Cardiac septum (tissue), 1 donor: ENCODE measurements at regions of chr12 and their contacts with region 1.

Region 1: GRCh38 chr12:57896434-57897201 is 44.7 kb upstream of the ATP23 start:
- DNase-seq: peak; percentile 88

Region 2: DNA sequence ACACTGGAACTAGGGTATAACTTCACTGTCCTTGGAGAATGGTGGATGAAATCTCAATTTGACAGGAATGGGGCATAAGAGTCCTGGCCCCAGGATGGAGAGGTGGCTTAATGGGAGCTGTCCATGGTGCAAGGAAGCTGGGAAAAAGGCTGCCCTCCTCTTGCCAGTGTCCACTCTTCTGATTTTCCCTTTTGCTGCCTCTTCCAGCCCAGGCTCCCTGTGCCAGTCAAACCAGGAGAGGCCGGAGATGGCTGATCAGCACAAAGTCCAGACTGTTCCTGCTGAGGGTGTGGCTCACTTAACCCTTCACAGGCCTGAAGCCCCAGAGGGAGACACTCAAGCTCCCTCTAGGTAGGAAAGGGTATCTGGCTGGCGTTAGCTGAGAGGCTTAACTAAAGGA is 846.7 kb before region 1 on chr12 and contains the start of gene MYO1A:
- intact Hi-C with region 1: no loop called
- DNase-seq: no peak
- total RNA-seq, gene MYO1A: 0.11 TPM

Region 3: DNA sequence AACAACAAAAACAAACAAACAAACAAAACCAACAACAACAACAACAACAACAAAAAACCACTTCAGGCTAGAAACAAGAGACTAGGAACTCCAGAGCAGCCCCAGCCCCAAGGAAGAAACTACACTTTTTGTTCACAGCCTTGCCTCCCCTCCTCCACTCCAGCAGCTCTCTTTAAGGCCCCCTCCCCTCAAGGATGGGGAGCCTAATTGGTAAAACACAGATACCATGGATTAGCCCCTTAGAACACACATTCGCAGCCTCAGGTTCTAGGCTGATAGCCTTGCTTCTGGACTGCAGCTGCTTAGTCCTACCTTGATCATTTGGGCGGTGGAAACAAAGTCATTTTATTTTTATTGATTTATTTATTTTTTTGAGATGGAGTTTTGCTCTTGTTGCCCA is 66.2 kb before region 1 on chr12:
- intact Hi-C with region 1: loop called (anchors 2 kb)
- DNase-seq: no peak

Region 4: GRCh38 chr12:57836442-57837375 is 59.9 kb before region 1 on chr12:
- intact Hi-C with region 1: loop called (anchors 2 kb)
- DNase-seq: peak; percentile 85

Region 5: DNA sequence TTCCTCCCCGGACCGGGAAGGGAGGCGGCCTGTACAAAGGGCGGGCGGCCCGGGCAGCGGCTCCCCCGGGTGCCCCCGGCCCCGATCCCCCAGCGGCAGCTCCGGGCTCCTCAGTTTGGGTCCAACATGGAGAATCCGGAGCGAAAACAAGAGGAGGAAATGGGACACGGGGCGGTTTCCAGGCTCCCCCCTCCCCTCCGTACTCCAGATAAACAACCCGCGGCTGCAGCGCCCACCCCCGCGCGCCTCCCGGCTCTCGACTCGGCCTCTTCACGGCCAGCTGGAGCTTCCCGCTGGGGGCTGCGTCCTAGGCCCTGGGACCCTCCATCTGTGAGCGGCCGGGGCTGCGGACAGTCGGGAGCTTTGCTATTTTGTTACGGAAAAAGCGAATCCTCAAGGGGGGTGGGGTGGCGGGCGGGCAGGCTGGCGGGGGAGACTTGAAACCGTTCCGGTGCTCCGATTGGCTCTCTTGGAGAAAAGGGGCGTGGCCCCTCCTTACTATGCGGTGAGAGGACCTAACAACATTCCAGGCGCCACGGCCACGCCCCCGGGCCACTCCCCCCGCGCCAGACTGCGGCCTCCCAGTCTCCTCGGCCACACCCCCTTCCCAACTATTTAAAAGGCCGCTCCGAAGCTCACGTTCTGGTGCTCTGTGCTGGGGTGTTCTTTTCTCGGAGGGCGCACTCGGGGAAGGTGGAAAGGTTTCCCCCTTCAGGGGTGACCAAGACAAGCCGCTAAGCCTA is 49.9 kb before region 1 on chr12 and contains the start of gene CTDSP2:
- intact Hi-C with region 1: loop called (anchors 2 kb)
- DNase-seq: peak; percentile 100
- total RNA-seq, gene CTDSP2: 89.2 TPM

Region 6: DNA sequence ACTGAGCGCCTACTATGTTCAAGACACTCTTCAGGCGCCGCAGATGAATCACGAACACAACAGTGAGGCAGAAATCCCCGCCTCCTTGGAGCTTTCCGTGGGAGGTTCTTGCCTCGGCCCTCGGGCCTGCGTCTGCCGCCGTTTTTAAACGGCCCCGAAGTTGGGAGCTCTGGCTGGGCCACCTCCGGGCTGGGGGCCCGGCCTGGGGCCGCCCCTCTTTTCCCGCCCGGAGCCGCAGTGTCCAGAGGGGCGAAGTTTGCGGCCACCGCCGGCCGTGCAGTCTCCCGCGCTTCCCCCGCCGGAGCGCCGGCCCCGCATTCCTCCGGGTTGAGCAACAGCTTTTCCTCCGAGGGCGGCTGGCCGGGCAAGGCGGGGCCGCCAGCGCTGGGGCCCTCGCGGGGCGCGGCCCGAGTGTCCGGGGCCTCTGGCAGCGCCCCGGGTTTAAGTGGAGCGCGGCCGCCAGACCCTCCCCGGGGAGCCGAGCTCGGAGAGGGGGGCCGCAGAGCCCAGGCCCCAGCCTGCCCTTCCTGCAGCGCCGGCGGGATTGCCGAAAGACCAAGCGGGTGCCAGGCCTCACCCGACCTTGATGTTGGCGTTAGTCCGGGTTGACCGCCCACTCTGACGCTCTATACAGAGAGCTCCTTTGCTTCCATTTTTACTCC is 31.4 kb before region 1 on chr12:
- intact Hi-C with region 1: loop called (anchors 1 kb)
- DNase-seq: peak; percentile 90